Naive thymus-derived CD4-positive, alpha-beta T cell (primary cell): ENCODE measurements at regions of chr13 and their contacts with region 1.

Region 1: DNA sequence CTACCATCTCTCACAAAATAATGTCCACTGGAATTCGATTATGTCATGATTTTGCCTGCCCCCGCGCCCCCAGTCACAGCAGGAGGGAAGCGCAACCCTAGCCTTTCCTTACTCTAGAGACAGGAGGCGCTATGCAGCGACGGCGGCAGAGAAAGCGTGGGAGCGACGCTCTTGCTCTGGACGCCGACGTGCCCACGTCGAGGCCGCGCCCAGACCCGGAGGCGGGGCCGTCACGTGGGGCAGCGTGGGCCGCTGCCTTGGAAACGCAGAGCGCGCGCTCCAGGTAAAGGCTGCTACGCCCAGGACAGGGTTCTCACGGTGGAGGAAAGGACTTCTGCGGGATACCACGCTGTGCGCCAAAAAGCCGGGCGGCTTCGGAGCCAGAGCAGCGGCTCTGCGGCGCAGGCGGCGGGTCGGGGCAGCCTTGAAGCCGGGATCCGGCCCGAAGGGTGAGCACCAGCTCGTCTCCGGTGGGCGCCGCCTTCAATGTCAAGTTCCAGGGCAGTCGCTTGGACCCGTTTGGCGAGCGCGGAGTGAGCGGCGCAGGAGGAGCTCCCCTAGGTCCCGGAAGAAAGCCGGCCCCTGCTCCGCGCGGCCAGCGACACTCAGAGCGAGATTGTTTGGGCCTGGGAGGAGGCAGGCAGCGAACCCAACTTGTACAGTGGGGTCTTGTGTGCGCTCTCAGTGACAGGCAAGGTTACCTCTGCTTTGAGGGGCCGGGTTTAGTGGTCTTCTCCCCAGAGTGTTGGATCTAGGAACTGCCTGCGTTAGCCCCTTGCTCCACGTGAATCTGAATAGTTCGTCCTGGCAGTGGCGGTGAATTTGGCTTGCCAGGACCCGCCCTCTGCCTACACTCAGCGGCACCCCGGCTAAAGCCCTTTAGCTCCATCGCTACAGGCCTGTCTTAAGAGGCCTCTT is 121.7 kb downstream of the MRPL57 start:
- DNase-seq: peak; percentile 79 to 91 (median 85)
- ATAC-seq: peak; percentile 100
- H3K4me3 ChIP-seq: peak overlapping the region; percentile 90
- H3K4me3 Mint-ChIP-seq: peak overlapping the region; percentile 78 to 95 (median 86)
- H3K27ac ChIP-seq: peak overlapping the region; percentile 44
- H3K27ac Mint-ChIP-seq: peak overlapping the region; percentile 58 to 90 (median 72)
- H3K4me1 ChIP-seq: peaks cover 11 to 15% of the 10 kb centered on the region in 2 donors
- H3K4me1 Mint-ChIP-seq: peaks cover 11 to 25% (median 22%) of the 10 kb centered on the region in 7 donors
- H3K27me3 ChIP-seq: no peaks in the 10 kb centered on the region
- H3K27me3 Mint-ChIP-seq: no peaks in the 10 kb centered on the region

Region 2: DNA sequence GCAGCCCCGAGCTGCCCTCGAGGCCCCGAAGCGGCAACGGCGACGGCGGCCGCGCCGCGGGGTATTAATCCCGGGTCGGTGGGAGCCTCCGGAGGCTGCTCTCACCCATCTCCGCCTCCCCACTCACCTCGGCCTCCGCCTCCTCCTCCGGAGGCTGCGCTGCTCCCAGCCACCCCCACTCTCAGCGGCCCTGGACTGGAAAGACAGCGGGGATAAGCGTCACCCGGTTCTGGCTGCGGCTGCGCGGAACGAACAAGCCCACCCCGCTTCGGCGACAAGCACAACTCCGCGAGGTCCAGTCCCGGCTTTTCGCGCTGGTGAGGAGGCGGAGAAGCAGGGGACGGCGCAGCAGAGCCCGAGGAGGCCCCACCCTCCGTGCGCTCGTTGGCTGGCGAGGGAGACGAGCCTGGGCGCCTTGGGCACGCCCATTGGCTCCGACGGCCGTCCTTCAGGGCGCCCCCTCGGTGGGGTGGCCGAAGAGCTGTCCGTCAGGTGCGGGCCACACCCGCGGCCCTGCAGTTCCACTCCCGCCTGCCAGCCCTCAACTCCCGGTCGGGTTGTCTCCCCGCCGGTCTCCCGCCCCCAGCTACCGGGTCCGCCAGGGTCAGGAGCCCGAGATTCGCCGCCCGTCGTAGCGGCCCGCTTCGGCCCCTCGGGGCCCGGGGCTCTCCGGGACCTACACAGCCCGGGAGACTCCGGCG is 1434.7 kb before region 1 on chr13 and contains the start of gene ZMYM5:
- CTCF ChIA-PET with region 1: no interaction called
- POLR2A ChIA-PET with region 1: no interaction called
- intact Hi-C with region 1: loop called in 1 of 2 experiments (anchors 5 kb)
- DNase-seq: peak; percentile 87 to 96 (median 90)
- ATAC-seq: peak; percentile 89
- H3K4me3 ChIP-seq: peak within 1 kb of the TSS; percentile 80
- H3K4me3 Mint-ChIP-seq: peak within 1 kb of the TSS; percentile 85 to 98 (median 97)
- H3K27ac ChIP-seq: peak within 1 kb of the TSS; percentile 84
- H3K27ac Mint-ChIP-seq: peak within 1 kb of the TSS; percentile 90 to 98 (median 97)
- H3K4me1 ChIP-seq: peaks cover 22 to 23% of the 10 kb centered on the region in 2 donors
- H3K4me1 Mint-ChIP-seq: peaks cover 12 to 43% (median 37%) of the 10 kb centered on the region in 7 donors
- H3K27me3 ChIP-seq: no peaks in the 10 kb centered on the region
- H3K27me3 Mint-ChIP-seq: no peaks in the 10 kb centered on the region
- total RNA-seq, gene ZMYM5: 17.5 to 25.6 (median 24.7) TPM

Region 3: GRCh38 chr13:20043207-20043925 is 1254.8 kb before region 1 on chr13:
- CTCF ChIA-PET with region 1: no interaction called
- POLR2A ChIA-PET with region 1: no interaction called
- intact Hi-C with region 1: no loop called
- DNase-seq: no peak
- ATAC-seq: no peak
- H3K4me3 ChIP-seq: no peak overlapping the region
- H3K4me3 Mint-ChIP-seq: peak overlapping the region in 1 of 10 donors; percentile 34
- H3K27ac ChIP-seq: no peak overlapping the region
- H3K27ac Mint-ChIP-seq: peak overlapping the region in 2 of 9 donors; percentile 70 to 72
- H3K4me1 ChIP-seq: no peaks in the 10 kb centered on the region
- H3K4me1 Mint-ChIP-seq: peaks cover 21 to 58% (median 51%) of the 10 kb centered on the region in 7 donors
- H3K27me3 ChIP-seq: no peaks in the 10 kb centered on the region
- H3K27me3 Mint-ChIP-seq: no peaks in the 10 kb centered on the region

Region 4: DNA sequence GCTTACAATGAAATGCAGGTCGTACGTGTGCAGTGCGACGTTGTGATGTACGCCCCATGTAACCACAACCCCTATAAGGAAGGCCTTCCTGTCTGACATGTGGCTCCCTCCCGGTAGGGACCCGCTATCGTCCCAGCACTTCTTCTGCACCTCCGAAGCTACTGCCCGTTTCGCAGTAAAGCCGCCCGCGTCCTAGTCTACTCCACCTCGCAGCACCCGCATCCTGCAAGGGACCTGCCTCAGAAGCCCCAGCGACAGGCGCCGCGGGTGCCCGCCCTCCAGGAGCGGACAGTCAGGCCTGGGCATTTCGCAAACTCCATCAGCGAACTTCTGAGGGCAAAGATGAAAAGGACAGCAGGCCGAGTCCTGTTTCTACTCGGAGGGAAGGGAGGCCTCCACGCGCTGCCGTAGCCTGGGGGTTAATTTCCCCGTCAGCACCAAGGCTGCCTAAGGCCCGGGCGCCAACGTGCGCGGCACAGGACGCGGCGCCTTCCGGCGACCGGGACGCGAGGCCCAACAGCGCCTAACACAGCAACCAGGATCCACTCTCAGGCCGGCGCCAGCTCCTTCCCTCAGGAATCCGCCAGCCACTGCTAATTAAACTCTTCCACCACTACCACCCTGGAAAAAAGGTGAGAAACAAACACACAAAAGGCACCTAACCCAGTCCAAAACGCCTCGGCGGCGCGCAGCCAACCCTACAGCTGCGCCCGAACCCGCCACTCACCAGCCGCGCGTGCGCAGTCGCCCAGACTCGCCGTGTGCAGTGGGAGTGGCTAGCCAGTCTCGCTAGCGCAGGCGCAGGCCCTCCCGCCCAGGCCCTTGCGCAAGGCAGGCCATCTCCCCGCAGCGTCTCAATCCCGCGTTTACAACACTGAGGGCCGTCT is 524.7 kb before region 1 on chr13 and contains the start of gene EEF1AKMT1:
- CTCF ChIA-PET with region 1: no interaction called
- POLR2A ChIA-PET with region 1: no interaction called
- intact Hi-C with region 1: loop called (anchors 1 to 5 kb)
- DNase-seq: peak; percentile 88 to 98 (median 94)
- ATAC-seq: peak; percentile 93
- H3K4me3 ChIP-seq: peak within 1 kb of the TSS; percentile 90
- H3K4me3 Mint-ChIP-seq: peak within 1 kb of the TSS; percentile 85 to 99 (median 94)
- H3K27ac ChIP-seq: peak within 1 kb of the TSS; percentile 93
- H3K27ac Mint-ChIP-seq: peak within 1 kb of the TSS; percentile 94 to 100 (median 99)
- H3K4me1 ChIP-seq: peaks cover 9 to 16% of the 10 kb centered on the region in 2 donors
- H3K4me1 Mint-ChIP-seq: peaks cover 19 to 60% (median 53%) of the 10 kb centered on the region in 7 donors
- H3K27me3 ChIP-seq: no peaks in the 10 kb centered on the region
- H3K27me3 Mint-ChIP-seq: no peaks in the 10 kb centered on the region
- total RNA-seq, gene EEF1AKMT1: 4.2 to 11.2 (median 8.5) TPM

Region 5: DNA sequence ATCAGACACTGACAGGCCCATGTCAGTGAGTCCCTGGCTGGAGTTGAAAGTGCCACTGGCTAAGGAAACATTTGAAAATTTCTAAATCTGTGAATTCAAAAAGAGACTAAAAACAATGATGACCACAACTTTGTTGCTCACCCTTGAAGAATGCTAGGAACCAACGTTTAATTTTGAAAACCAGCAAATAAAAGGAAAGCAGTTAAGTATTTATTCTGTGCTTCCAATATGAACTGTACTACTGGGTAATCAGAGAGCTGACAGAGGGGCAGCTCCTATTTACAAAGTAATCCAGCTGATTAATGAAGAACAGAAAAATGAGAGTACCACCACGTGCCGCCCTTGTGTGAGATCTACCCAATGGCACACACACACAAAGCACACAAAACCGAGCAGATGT is 192.1 kb before region 1 on chr13:
- CTCF ChIA-PET with region 1: interaction called, 3 read pairs
- POLR2A ChIA-PET with region 1: no interaction called
- intact Hi-C with region 1: loop called (anchors 1 to 2 kb)
- DNase-seq: no peak
- ATAC-seq: no peak
- H3K4me3 ChIP-seq: no peak overlapping the region
- H3K4me3 Mint-ChIP-seq: no peak overlapping the region
- H3K27ac ChIP-seq: no peak overlapping the region
- H3K27ac Mint-ChIP-seq: no peak overlapping the region
- H3K4me1 ChIP-seq: no peaks in the 10 kb centered on the region
- H3K4me1 Mint-ChIP-seq: peaks cover 0 to 2% (median 0%) of the 10 kb centered on the region in 7 donors
- H3K27me3 ChIP-seq: no peaks in the 10 kb centered on the region
- H3K27me3 Mint-ChIP-seq: peaks cover 0 to 5% (median 0%) of the 10 kb centered on the region in 5 donors

Region 6: GRCh38 chr13:21246761-21247452 is 51.3 kb before region 1 on chr13:
- CTCF ChIA-PET with region 1: no interaction called
- POLR2A ChIA-PET with region 1: no interaction called
- intact Hi-C with region 1: no loop called
- DNase-seq: no peak
- ATAC-seq: no peak
- H3K4me3 ChIP-seq: no peak overlapping the region
- H3K4me3 Mint-ChIP-seq: no peak overlapping the region
- H3K27ac ChIP-seq: no peak overlapping the region
- H3K27ac Mint-ChIP-seq: no peak overlapping the region
- H3K4me1 ChIP-seq: no peaks in the 10 kb centered on the region
- H3K4me1 Mint-ChIP-seq: peaks cover 0 to 16% (median 4%) of the 10 kb centered on the region in 7 donors
- H3K27me3 ChIP-seq: no peaks in the 10 kb centered on the region
- H3K27me3 Mint-ChIP-seq: peaks cover 0 to 21% (median 6%) of the 10 kb centered on the region in 5 donors

Region 7: GRCh38 chr13:21326155-21327031 is 28.2 kb after region 1 on chr13:
- CTCF ChIA-PET with region 1: no interaction called
- POLR2A ChIA-PET with region 1: interaction called, 3 read pairs
- intact Hi-C with region 1: loop called in 1 of 2 experiments (anchors 1 kb)
- DNase-seq: peak in 4 of 9 donors; percentile 14 to 27 (median 23)
- ATAC-seq: peak; percentile 51
- H3K4me3 ChIP-seq: peak overlapping the region; percentile 52
- H3K4me3 Mint-ChIP-seq: peak overlapping the region in 7 of 10 donors; percentile 64 to 75 (median 74)
- H3K27ac ChIP-seq: peak overlapping the region; percentile 41
- H3K27ac Mint-ChIP-seq: peak overlapping the region in 4 of 9 donors; percentile 50 to 71 (median 69)
- H3K4me1 ChIP-seq: no peaks in the 10 kb centered on the region
- H3K4me1 Mint-ChIP-seq: peaks cover 0 to 29% (median 5%) of the 10 kb centered on the region in 7 donors
- H3K27me3 ChIP-seq: no peaks in the 10 kb centered on the region
- H3K27me3 Mint-ChIP-seq: no peaks in the 10 kb centered on the region

Region 8: GRCh38 chr13:21458813-21459701 is 160.9 kb after region 1 on chr13 and contains the start of gene ZDHHC20:
- CTCF ChIA-PET with region 1: interaction called, 16 read pairs
- POLR2A ChIA-PET with region 1: interaction called, 11 read pairs
- intact Hi-C with region 1: loop called (anchors 1 kb)
- DNase-seq: peak; percentile 75 to 99 (median 88)
- ATAC-seq: peak; percentile 98
- H3K4me3 ChIP-seq: peak within 1 kb of the TSS; percentile 90
- H3K4me3 Mint-ChIP-seq: peak within 1 kb of the TSS; percentile 91 to 97 (median 94)
- H3K27ac ChIP-seq: peak within 1 kb of the TSS; percentile 97
- H3K27ac Mint-ChIP-seq: peak within 1 kb of the TSS; percentile 74 to 98 (median 94)
- H3K4me1 ChIP-seq: peaks cover 9 to 19% of the 10 kb centered on the region in 2 donors
- H3K4me1 Mint-ChIP-seq: peaks cover 27 to 55% (median 42%) of the 10 kb centered on the region in 7 donors
- H3K27me3 ChIP-seq: no peaks in the 10 kb centered on the region
- H3K27me3 Mint-ChIP-seq: peaks cover 0 to 7% (median 0%) of the 10 kb centered on the region in 5 donors
- total RNA-seq, gene ZDHHC20: 60.8 to 89.9 (median 71.7) TPM

Region 9: GRCh38 chr13:23289917-23290357 is 1991.8 kb after region 1 on chr13:
- CTCF ChIA-PET with region 1: no interaction called
- POLR2A ChIA-PET with region 1: no interaction called
- intact Hi-C with region 1: no loop called
- DNase-seq: no peak
- ATAC-seq: no peak
- H3K4me3 ChIP-seq: no peak overlapping the region
- H3K4me3 Mint-ChIP-seq: no peak overlapping the region
- H3K27ac ChIP-seq: no peak overlapping the region
- H3K27ac Mint-ChIP-seq: no peak overlapping the region
- H3K4me1 ChIP-seq: no peaks in the 10 kb centered on the region
- H3K4me1 Mint-ChIP-seq: no peaks in the 10 kb centered on the region
- H3K27me3 ChIP-seq: no peaks in the 10 kb centered on the region
- H3K27me3 Mint-ChIP-seq: peaks cover 4 to 31% (median 20%) of the 10 kb centered on the region in 5 donors